ENCODE measurements at regions of chr2 and their contacts with region 1.

Region 1: GRCh38 chr2:211380041-211380440 is 823.6 kb downstream of the CPS1 start:
- DNase-seq: no peak
- H3K4me3 ChIP-seq: no peak overlapping the region
- CTCF ChIP-seq: no peak
- POLR2A ChIP-seq: no peak

Region 2: DNA sequence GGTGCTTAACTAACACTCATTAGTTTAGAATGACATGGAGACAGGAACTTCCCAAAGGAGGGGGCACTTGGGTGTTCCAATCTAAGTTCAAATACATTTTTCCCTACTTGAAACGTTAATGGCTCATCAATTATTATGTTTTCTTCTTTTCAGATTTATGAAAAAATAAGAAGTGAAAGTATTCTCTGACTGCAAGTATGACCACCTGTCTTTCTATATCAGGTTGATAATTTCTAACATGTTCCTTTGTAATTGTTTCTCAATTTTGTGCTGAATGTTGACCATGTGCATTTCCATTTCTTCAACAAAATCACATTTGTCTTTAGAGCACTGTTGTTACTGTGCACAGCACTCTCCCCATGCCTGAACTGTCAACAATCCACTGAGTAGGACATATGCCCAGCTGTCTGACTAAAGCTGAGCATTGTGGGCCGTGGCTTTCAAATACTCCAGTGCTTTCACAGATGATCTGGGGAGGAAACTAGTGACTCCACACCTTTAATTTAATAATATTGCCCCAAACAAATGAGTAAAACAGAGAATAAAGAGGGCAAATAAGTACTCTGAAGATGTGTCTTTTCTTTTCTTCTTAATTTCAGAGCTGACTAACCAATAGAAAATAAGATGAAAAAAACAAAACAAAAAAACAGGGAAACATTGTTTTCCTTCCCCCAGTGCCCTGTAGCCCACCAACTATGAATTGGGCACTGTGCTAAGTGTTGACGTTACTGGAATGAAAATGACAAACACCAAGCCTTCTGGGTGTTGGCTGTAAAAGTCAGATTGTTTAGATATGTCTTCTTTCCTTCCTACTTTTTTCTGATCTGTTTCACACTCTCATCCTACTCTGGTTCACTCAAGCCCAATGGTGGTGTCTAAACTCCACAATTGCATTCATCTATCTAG is 919.5 kb before region 1 on chr2:
- intact Hi-C with region 1: no loop called
- DNase-seq: no peak
- H3K4me3 ChIP-seq: no peak overlapping the region
- CTCF ChIP-seq: no peak
- POLR2A ChIP-seq: no peak

Region 3: GRCh38 chr2:210730672-210731071 is 649.4 kb before region 1 on chr2:
- intact Hi-C with region 1: loop called (anchors 5 kb)
- DNase-seq: no peak
- H3K4me3 ChIP-seq: no peak overlapping the region
- CTCF ChIP-seq: no peak
- POLR2A ChIP-seq: no peak

Region 4: GRCh38 chr2:211061612-211062296 is 318.3 kb before region 1 on chr2:
- intact Hi-C with region 1: no loop called
- DNase-seq: no peak
- H3K4me3 ChIP-seq: no peak overlapping the region
- CTCF ChIP-seq: no peak
- POLR2A ChIP-seq: no peak

Region 5: GRCh38 chr2:211203986-211204385 is 176.1 kb before region 1 on chr2:
- intact Hi-C with region 1: no loop called
- DNase-seq: no peak
- H3K4me3 ChIP-seq: no peak overlapping the region
- CTCF ChIP-seq: no peak
- POLR2A ChIP-seq: no peak

Measured in lower leg skin (tissue), 4 donors.